ENCODE measurements at regions of chr11 and their contacts with region 1.

Region 1: DNA sequence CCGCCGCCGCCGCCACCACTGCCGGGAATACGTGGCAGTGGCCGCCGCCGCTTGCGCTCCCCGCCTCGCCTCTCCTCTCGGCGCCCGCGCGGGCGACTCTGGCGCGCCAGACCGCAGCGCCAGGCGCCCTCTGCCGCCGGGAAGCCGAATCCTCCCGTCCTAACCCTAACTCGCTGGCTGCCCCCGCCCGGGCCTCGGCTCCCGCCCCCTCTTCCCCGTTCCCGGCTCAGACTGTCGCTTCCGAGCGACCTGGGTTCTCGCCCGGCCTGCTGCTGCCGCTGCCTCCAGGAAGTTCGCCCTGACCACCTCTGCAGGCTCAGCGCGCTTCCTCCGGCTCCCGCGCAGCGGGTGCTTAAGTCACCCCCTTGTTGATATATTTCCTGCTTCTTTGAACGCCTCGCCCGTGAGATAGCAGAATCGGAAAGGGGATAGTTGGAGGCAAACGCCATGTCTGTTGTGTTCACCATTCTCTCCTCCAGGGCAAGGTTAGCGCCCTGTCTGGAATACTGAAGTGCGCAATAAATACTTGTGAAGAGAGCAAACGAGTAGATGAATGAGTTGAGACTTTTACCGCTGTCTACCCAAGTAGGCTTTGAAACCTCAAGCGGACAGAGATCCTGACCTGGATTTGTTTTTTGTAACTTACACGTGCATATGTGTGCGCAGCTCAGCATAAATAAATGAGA is at the start of gene SMCO4:
- DNase-seq: peak; percentile 76
- ATAC-seq: peak; percentile 87
- H3K4me3 Mint-ChIP-seq: peak within 1 kb of the TSS; percentile 83
- H3K27ac Mint-ChIP-seq: peak within 1 kb of the TSS; percentile 79
- H3K4me1 Mint-ChIP-seq: peaks cover 33% of the 10 kb centered on the region
- H3K27me3 Mint-ChIP-seq: peaks cover 40% of the 10 kb centered on the region
- total RNA-seq, gene SMCO4: 37.5 to 62.6 TPM

Region 2: DNA sequence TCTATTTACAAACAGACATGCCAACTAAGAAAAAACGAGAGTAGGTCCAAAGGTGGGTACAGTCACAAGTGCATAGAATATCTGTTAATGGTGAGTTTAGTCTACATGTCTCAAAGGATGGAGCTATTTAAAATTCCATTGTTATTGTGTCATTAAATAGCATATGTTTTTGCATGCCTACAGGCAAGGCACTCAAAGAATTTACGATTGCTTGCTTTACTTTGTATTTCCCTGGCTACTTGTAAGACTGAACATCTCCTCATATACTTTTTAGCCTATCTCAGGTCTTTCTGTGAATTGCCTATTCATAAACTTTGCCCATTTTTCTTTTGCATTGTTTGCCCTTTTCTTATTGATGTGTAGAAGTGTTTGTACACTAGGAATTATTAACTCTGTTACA is 173.2 kb before region 1 on chr11:
- CTCF ChIA-PET with region 1: no interaction called
- DNase-seq: no peak
- ATAC-seq: no peak
- H3K4me3 Mint-ChIP-seq: no peak overlapping the region
- H3K27ac Mint-ChIP-seq: no peak overlapping the region
- H3K4me1 Mint-ChIP-seq: no peaks in the 10 kb centered on the region
- H3K27me3 Mint-ChIP-seq: no peaks in the 10 kb centered on the region

Region 3: DNA sequence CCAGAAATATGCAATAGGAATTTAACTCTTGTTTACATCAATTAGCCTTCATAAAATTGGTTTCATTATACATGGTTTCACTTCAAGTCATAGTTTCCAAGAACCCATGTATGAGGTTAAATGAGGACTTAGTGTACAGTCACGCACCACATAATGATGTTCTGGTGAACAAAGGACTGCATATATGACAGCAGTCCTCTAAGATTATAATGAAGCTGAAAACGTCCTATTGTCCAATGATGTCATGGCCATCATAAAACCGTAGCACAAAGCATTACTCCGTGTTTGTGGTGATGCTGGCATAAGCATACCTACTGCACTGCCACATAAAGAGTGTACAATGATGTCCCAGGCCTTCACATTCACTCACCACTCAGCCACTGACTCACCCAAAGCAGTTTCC is 31.4 kb before region 1 on chr11:
- CTCF ChIA-PET with region 1: interaction called, 11 read pairs
- DNase-seq: peak; percentile 66
- ATAC-seq: peak; percentile 95
- H3K4me3 Mint-ChIP-seq: peak overlapping the region; percentile 60
- H3K27ac Mint-ChIP-seq: peak overlapping the region; percentile 95
- H3K4me1 Mint-ChIP-seq: peaks cover 49% of the 10 kb centered on the region
- H3K27me3 Mint-ChIP-seq: no peaks in the 10 kb centered on the region

Region 4: GRCh38 chr11:93529707-93530467 is 13.5 kb before region 1 on chr11:
- CTCF ChIA-PET with region 1: interaction called, 29 read pairs
- DNase-seq: peak; percentile 61
- ATAC-seq: peak; percentile 28
- H3K4me3 Mint-ChIP-seq: peak overlapping the region; percentile 3
- H3K27ac Mint-ChIP-seq: peak overlapping the region; percentile 83
- H3K4me1 Mint-ChIP-seq: peaks cover 85% of the 10 kb centered on the region
- H3K27me3 Mint-ChIP-seq: no peaks in the 10 kb centered on the region

Region 5: DNA sequence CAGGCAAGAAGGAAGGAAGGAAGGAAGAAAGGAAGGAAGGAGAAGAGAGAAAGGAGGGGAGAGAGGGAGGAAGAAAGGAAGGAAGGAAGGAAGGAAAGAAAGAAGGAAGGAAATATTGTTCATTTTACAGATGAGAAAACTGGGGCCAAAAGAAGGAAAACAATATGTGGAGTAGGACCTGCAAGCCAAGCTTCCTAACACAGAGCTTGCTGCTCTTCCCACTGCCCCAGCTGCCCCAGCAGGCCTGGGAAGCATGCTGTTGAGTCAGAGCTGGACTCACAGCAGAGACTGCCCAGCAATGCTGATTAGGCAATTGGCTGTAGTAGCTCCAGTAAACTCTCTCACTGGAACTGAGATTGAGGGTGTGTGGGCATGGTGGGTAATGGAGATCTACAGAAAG is 42.3 kb after region 1 on chr11:
- CTCF ChIA-PET with region 1: no interaction called
- DNase-seq: no peak
- ATAC-seq: no peak
- H3K4me3 Mint-ChIP-seq: no peak overlapping the region
- H3K27ac Mint-ChIP-seq: no peak overlapping the region
- H3K4me1 Mint-ChIP-seq: no peaks in the 10 kb centered on the region
- H3K27me3 Mint-ChIP-seq: peaks cover 22% of the 10 kb centered on the region

Measured in activated CD8-positive, alpha-beta memory T cell treated with anti-CD3 and anti-CD28 coated beads, Interleukin-2, amount 10 ng/mL, durations not matched to agents 7 days and 5 days (primary cell).